ENCODE measurements at regions of chrX and their contacts with region 1.

Region 1: GRCh38 chrX:44432641-44433040 is 89.2 kb upstream of the EFHC2 start:
- DNase-seq: peak; percentile 8
- ATAC-seq: no peak
- H3K4me3 ChIP-seq: no peak overlapping the region
- H3K27ac ChIP-seq: no peak overlapping the region
- H3K4me1 ChIP-seq: peaks cover 0 to 16% of the 10 kb centered on the region in 2 experiments; a peak in 2 of 4 replicates
- H3K27me3 ChIP-seq: no peaks in the 10 kb centered on the region
- CTCF ChIP-seq: no peak
- POLR2A ChIP-seq: no peak
- RAD21 ChIP-seq: no peak

Region 2: DNA sequence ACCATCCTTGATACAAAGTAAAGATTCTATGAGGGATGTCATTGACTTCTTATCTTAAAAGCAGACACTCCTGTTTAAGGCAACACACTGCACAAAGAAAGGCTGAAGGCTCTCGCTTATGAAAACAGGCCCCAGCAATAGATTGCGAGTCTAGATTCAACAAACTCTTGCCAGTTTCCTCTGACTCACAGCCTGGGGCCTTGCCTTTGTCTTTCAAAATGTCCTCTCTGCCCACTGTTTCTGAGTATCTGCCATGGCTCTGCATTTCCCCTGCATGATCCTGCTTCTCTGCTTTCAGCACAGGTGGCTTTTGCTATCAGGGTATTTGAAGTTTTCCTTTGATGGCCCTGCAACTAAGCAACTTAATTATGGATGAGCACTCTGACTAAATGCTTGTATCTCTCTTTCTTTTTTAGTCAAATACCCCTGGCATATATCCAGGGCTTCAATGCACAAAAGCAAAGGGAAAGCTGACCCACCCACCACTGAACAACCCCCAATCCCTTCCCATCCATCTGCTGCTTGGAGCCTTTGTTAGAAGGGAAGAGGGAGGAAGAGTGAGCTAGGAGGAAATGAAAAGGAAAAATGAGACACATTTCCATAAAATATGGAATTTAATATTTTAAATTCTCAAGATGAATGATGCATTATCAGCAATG is 491.7 kb before region 1 on chrX:
- CTCF ChIA-PET with region 1: no interaction called
- POLR2A ChIA-PET with region 1: no interaction called
- RAD21 ChIA-PET with region 1: no interaction called
- intact Hi-C with region 1: no loop called
- DNase-seq: no peak
- ATAC-seq: no peak
- H3K4me3 ChIP-seq: no peak overlapping the region
- H3K27ac ChIP-seq: no peak overlapping the region
- H3K4me1 ChIP-seq: no peaks in the 10 kb centered on the region
- H3K27me3 ChIP-seq: no peaks in the 10 kb centered on the region
- CTCF ChIP-seq: no peak
- POLR2A ChIP-seq: no peak
- RAD21 ChIP-seq: no peak

Region 3: DNA sequence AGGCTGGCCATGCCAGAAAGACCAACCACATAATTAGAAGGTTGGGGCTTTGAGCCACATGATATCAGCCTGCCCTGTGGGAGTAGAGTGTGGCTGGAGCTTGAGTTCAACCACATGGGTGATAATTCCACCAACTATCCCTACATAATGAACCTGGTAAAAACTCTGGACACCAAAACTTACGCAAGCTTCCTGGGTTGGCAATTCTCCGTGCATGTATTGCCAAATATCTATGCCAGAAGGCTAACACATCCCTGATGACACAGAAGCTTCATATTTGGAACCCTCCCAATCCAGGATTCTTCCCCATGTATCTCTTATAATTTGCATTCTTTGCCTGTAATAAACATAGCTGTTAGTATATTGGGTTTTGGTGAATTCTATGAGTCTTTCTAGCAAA is 41.8 kb after region 1 on chrX:
- CTCF ChIA-PET with region 1: no interaction called
- POLR2A ChIA-PET with region 1: no interaction called
- RAD21 ChIA-PET with region 1: no interaction called
- intact Hi-C with region 1: no loop called
- DNase-seq: no peak
- ATAC-seq: no peak
- H3K4me3 ChIP-seq: no peak overlapping the region
- H3K27ac ChIP-seq: no peak overlapping the region
- H3K4me1 ChIP-seq: no peaks in the 10 kb centered on the region
- H3K27me3 ChIP-seq: no peaks in the 10 kb centered on the region
- CTCF ChIP-seq: no peak
- POLR2A ChIP-seq: no peak
- RAD21 ChIP-seq: no peak

Region 4: DNA sequence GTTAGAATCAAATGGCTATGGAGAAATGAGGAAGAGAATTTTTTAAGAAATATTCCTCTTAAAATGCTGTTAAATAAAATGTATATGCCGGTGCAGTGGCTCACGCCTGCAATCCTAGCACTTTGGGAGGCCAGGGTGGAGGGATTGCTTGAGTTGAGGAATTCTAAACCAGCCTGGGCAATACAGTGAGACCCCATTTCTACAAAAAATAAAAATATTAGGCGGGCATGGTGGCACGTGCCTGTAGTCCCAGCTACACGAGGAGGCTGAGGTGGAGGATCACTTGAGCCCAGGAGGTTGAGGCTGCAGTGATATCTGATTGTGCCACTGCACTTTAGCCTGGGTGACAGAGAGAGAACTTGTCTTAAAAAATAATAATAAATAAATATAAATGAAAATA is 117.9 kb after region 1 on chrX:
- CTCF ChIA-PET with region 1: no interaction called
- POLR2A ChIA-PET with region 1: no interaction called
- RAD21 ChIA-PET with region 1: no interaction called
- intact Hi-C with region 1: loop called (anchors 5 kb)
- DNase-seq: no peak
- ATAC-seq: no peak
- H3K4me3 ChIP-seq: no peak overlapping the region
- H3K27ac ChIP-seq: no peak overlapping the region
- H3K4me1 ChIP-seq: no peaks in the 10 kb centered on the region
- H3K27me3 ChIP-seq: no peaks in the 10 kb centered on the region
- CTCF ChIP-seq: no peak
- POLR2A ChIP-seq: no peak
- RAD21 ChIP-seq: no peak

Region 5: GRCh38 chrX:44570522-44570921 is 137.9 kb after region 1 on chrX:
- CTCF ChIA-PET with region 1: no interaction called
- POLR2A ChIA-PET with region 1: no interaction called
- RAD21 ChIA-PET with region 1: no interaction called
- intact Hi-C with region 1: no loop called
- DNase-seq: no peak
- ATAC-seq: no peak
- H3K4me3 ChIP-seq: no peak overlapping the region
- H3K27ac ChIP-seq: no peak overlapping the region
- H3K4me1 ChIP-seq: peaks cover 0 to 8% of the 10 kb centered on the region in 2 experiments; a peak in 2 of 4 replicates
- H3K27me3 ChIP-seq: no peaks in the 10 kb centered on the region
- CTCF ChIP-seq: no peak
- POLR2A ChIP-seq: no peak
- RAD21 ChIP-seq: no peak

Region 6: DNA sequence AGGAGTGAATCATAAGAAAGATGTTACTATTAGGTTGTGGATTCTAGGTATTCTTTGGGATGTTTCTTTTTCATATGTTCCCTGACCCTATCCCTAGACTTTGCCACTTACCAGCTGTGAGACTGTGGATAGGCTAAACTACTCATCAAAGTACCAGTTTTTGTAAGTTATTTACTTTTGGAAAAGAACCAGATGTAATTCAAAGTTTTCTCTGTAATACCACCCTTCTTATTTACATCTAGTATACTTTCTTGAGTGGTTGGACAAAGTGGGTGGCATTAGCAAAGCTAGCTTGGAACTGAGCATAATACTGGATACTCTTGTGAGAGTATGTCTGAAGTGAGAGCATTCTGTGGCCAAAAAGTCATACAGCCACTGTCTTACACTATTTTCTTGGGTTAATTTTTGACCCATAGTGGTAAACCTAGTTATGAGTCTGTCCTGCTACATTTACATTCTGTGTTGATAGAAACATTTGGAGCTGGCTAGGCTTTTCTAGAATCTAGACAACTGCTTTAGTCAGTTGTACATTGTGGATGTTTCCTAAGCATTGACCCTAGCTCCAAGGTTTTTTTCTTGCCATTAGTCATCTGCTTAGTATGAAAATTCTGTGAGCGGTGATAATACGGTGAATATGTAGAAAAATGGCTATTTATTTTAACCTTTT is 482.0 kb after region 1 on chrX:
- CTCF ChIA-PET with region 1: no interaction called
- POLR2A ChIA-PET with region 1: no interaction called
- RAD21 ChIA-PET with region 1: no interaction called
- intact Hi-C with region 1: no loop called
- DNase-seq: no peak
- ATAC-seq: no peak
- H3K4me3 ChIP-seq: no peak overlapping the region
- H3K27ac ChIP-seq: no peak overlapping the region
- H3K4me1 ChIP-seq: peaks cover 3 to 6% of the 10 kb centered on the region in 2 experiments; a peak in 2 of 4 replicates
- H3K27me3 ChIP-seq: no peaks in the 10 kb centered on the region
- CTCF ChIP-seq: no peak
- POLR2A ChIP-seq: no peak
- RAD21 ChIP-seq: no peak

Measured in HCT116 (cell line).